T-cell (primary cell): ENCODE measurements at regions of chr5 and their contacts with region 1.

Region 1: GRCh38 chr5:134626369-134627014 is 6.1 kb downstream of the SAR1B start:
- DNase-seq: no peak
- ATAC-seq: no peak
- H3K4me3 ChIP-seq: no peak overlapping the region
- H3K4me3 Mint-ChIP-seq: no peak overlapping the region
- H3K27ac ChIP-seq: no peak overlapping the region
- H3K27ac Mint-ChIP-seq: peak overlapping the region in 1 of 2 donors; percentile 55
- H3K4me1 ChIP-seq: peaks cover 3 to 4% of the 10 kb centered on the region in 2 experiments
- H3K4me1 Mint-ChIP-seq: peaks cover 33 to 41% (median 38%) of the 10 kb centered on the region in 3 donors
- H3K27me3 ChIP-seq: no peaks in the 10 kb centered on the region
- H3K27me3 Mint-ChIP-seq: no peaks in the 10 kb centered on the region

Region 2: DNA sequence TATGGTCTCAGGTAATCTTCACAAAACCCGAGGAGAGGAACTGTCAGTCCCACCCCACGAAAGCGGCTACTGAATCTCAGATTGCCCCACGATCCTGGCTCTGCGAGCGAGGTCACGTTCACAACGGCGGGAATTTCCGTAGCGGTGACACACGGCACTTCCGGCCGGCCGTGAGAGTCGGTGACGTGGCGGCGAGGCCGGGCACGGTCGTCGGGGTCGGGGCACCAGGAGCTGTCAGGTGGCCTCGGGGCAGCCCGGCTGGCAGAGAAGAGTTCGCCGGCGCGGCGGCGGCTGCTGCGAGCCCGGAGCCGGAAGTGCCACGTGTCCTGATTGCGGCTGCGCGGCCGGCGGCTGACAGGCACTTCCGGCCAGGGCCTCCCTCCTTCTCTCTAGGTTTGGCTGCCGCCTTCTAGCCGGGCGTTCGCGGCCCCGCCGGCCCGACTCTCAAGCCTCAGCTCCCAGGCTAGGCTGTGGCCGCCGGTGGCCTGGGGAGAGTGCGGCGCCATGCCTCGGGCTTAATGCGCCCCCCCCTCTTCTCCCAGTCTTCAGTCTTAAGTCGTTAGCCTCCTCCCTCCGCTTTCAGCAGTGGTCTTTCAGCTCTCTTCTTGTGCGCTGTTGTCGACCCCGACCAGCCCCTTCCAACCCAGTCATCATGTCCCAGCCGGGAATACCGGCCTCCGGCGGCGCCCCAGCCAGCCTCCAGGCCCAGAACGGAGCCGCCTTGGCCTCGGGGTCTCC is 22.1 kb after region 1 on chr5 and contains the start of gene SEC24A:
- CTCF ChIA-PET with region 1: interaction called in 1 of 2 experiments, 3 read pairs
- POLR2A ChIA-PET with region 1: interaction called in 1 of 2 experiments, 11 read pairs
- DNase-seq: peak; percentile 71 to 95 (median 83)
- ATAC-seq: peak; percentile 87 to 89 (median 88)
- H3K4me3 ChIP-seq: peak within 1 kb of the TSS; percentile 93 to 95
- H3K4me3 Mint-ChIP-seq: peak within 1 kb of the TSS; percentile 93 to 98 (median 97)
- H3K27ac ChIP-seq: peak within 1 kb of the TSS; percentile 100
- H3K27ac Mint-ChIP-seq: peak within 1 kb of the TSS; percentile 95 to 99
- H3K4me1 ChIP-seq: peaks cover 17 to 33% of the 10 kb centered on the region in 2 experiments
- H3K4me1 Mint-ChIP-seq: peaks cover 27 to 35% (median 32%) of the 10 kb centered on the region in 3 donors
- H3K27me3 ChIP-seq: no peaks in the 10 kb centered on the region
- H3K27me3 Mint-ChIP-seq: no peaks in the 10 kb centered on the region
- total RNA-seq, gene SEC24A: 15.4 to 17.7 (median 16.1) TPM

Region 3: DNA sequence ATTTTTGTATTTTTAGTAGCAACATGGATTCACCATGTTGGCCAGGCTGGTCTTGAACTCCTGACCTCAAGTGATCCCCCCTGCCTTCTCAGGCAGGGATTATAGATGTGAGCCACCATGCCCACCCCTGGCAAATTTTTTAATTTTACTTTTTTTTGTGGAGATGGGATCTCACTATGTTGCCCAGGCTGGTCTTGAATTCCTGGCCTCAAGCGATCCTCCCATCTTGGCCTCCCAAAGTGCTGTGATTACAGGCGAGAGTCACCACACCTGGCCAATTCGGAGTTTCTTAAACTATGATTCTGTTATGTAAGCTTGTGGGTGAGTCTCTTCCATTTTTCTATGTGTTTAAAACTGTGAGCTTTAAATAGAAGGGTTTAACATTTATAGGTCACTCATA is 306.0 kb after region 1 on chr5:
- CTCF ChIA-PET with region 1: no interaction called
- POLR2A ChIA-PET with region 1: interaction called in 1 of 2 experiments, 16 read pairs
- DNase-seq: no peak
- ATAC-seq: no peak
- H3K4me3 ChIP-seq: no peak overlapping the region
- H3K4me3 Mint-ChIP-seq: no peak overlapping the region
- H3K27ac ChIP-seq: no peak overlapping the region
- H3K27ac Mint-ChIP-seq: no peak overlapping the region
- H3K4me1 ChIP-seq: no peaks in the 10 kb centered on the region
- H3K4me1 Mint-ChIP-seq: no peaks in the 10 kb centered on the region
- H3K27me3 ChIP-seq: no peaks in the 10 kb centered on the region
- H3K27me3 Mint-ChIP-seq: no peaks in the 10 kb centered on the region